Activated CD4-positive, alpha-beta T cell treated with anti-CD3 and anti-CD28 coated beads, Interleukin-2, amount 10 ng/mL, durations not matched to agents 24 days and 14 days (primary cell): ENCODE measurements at regions of chr10 and their contacts with region 1.

Region 1: DNA sequence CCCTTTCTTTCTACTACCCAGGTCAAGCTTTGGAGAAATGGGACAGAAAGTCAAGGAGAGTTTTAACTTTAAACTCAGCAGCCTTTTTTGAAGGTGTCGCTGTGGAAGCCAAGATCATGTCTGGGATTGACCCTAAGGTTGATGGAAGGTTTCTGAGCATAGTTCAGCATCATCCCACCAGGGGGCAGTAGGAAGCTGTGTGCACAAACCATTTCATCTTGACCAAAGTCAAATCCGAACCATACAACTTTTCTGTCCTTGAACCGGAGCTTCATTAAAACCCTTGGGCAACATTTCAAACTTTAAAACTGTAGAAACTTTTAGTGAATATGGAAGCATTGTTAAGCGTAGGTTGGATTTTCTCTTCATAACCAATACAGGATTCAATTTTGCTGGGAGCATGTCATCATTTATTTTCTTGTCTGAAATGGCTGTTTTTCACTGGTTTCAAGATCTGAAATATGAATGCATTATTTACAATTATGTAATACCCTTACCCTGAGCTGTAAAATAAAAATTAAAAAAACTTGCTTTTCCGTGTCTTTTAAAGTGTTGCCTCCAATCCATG is 214.4 kb upstream of the KIAA1217 start:
- DNase-seq: peak; percentile 78
- H3K4me3 Mint-ChIP-seq: no peak overlapping the region
- H3K27ac Mint-ChIP-seq: no peak overlapping the region
- H3K4me1 Mint-ChIP-seq: no peaks in the 10 kb centered on the region
- H3K27me3 Mint-ChIP-seq: no peaks in the 10 kb centered on the region

Region 2: DNA sequence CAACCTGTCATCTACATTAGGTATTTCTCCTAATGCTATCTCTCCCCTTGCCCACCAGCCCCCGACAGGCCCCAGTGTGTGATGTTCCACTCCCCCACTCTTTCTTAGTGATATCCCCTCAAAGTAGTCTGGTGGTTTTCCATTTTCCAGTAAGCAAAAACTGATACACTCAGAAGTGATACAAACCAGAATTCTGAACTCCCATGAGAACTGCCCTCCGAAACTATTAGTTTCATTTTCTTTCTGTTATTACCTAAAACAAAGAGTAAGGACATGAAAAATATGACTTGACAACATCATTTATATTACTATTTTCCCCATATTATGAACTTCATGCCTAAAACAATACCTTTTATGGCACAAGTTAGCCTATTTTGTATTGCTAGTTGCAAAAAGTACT is 380.7 kb before region 1 on chr10:
- intact Hi-C with region 1: no loop called
- DNase-seq: no peak
- H3K4me3 Mint-ChIP-seq: no peak overlapping the region
- H3K27ac Mint-ChIP-seq: no peak overlapping the region
- H3K4me1 Mint-ChIP-seq: no peaks in the 10 kb centered on the region
- H3K27me3 Mint-ChIP-seq: no peaks in the 10 kb centered on the region

Region 3: DNA sequence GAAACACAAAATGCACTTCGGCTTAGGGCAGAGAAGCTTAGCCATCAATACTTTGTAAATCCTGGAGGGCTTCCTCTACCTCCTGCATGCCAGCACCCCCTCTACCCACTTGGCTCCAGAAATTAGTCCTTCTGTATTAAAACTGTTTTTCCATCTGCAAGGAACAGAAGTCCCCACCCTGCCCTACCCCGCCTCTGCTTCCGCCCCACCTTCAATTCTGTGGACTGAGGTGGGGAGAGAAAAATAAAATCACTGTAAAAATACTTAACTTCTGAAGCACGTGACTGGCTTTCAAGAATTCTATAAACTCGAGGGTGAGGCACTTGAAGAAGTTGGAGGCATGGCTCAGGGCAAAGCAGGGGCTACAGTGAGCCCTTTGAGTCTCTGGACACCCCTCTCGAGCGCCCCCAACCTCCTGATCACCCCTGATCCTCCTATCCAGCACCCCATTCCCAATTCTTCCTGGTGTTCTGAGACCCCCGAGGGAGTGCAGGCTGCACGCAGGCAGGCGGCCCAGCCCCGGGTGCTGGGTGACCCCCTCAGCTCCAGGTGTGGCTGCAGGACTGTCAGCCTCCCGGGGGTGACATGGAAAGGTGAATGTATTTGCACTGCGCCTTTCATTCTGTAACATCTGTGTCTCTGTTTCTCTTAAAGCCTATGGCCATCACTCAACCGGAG is 207.1 kb after region 1 on chr10:
- intact Hi-C with region 1: loop called (anchors 1 kb)
- DNase-seq: no peak
- H3K4me3 Mint-ChIP-seq: no peak overlapping the region
- H3K27ac Mint-ChIP-seq: no peak overlapping the region
- H3K4me1 Mint-ChIP-seq: peaks cover 9% of the 10 kb centered on the region
- H3K27me3 Mint-ChIP-seq: peaks cover 14% of the 10 kb centered on the region

Region 4: GRCh38 chr10:24360282-24361127 is 365.9 kb after region 1 on chr10:
- intact Hi-C with region 1: loop called (anchors 5 kb)
- DNase-seq: peak; percentile 76
- H3K4me3 Mint-ChIP-seq: no peak overlapping the region
- H3K27ac Mint-ChIP-seq: no peak overlapping the region
- H3K4me1 Mint-ChIP-seq: no peaks in the 10 kb centered on the region
- H3K27me3 Mint-ChIP-seq: no peaks in the 10 kb centered on the region

Region 5: GRCh38 chr10:24503461-24504320 is 509.1 kb after region 1 on chr10:
- intact Hi-C with region 1: loop called (anchors 1 kb)
- DNase-seq: peak; percentile 78
- H3K4me3 Mint-ChIP-seq: no peak overlapping the region
- H3K27ac Mint-ChIP-seq: no peak overlapping the region
- H3K4me1 Mint-ChIP-seq: no peaks in the 10 kb centered on the region
- H3K27me3 Mint-ChIP-seq: no peaks in the 10 kb centered on the region

Region 6: GRCh38 chr10:24518981-24519597 is 524.5 kb after region 1 on chr10:
- intact Hi-C with region 1: loop called (anchors 2 kb)
- DNase-seq: peak; percentile 81
- H3K4me3 Mint-ChIP-seq: peak overlapping the region; percentile 2
- H3K27ac Mint-ChIP-seq: no peak overlapping the region
- H3K4me1 Mint-ChIP-seq: peaks cover 11% of the 10 kb centered on the region
- H3K27me3 Mint-ChIP-seq: no peaks in the 10 kb centered on the region

Region 7: DNA sequence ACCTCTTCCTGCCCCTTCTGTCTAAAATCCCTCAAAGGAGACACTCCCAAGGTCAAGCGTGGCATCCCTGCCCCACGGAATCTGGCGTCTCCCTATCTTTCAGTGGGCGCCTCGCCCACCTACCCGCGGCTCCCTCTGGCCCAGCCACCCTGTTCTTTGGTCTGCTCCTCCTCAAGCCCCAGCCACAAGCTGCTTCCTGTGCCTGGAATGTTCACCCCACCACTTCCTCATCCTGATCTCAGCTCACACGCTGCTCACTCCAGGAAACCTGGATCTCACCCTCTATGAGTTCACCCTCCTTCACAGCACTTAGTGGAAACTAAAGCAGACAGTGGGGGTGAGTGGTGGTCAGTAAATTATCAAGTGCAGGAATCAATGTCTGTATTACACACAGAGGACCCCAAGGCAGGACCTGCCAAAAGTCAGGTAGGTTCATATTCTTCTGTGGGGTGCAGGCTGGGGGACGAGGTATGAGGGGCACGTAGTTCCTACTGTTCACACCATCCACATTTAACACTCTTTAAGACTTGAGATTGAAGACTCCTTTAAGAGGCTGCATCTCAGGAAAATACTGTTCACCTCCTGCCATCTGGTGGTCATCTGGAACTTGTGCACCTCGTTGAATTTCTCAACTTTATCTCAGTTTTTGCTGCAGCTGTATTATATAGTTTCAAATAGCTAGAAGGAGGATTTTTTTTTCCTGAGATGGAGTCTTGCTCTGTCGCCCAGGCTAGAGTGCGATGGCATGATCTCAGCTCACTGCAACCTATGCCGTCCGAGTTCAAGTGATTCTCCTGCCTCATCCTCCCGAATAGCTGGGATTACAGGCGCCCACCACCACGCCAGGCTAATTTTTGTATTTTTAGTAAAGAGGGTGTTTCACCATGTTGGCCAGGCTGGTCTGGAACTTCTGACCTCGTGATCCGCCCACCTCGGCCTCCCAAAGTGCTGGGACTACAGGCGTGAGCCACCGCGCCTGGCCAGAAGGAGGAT is 562.5 kb after region 1 on chr10:
- intact Hi-C with region 1: loop called (anchors 1 kb)
- DNase-seq: peak; percentile 71
- H3K4me3 Mint-ChIP-seq: no peak overlapping the region
- H3K27ac Mint-ChIP-seq: no peak overlapping the region
- H3K4me1 Mint-ChIP-seq: peaks cover 4% of the 10 kb centered on the region
- H3K27me3 Mint-ChIP-seq: no peaks in the 10 kb centered on the region